ENCODE measurements at regions of chr1 and their contacts with region 1.

Region 1: GRCh38 chr1:15152318-15153183 is 996 bp upstream of the TMEM51 start:
- DNase-seq: peak; percentile 89
- H3K4me3 ChIP-seq: peak overlapping the region; percentile 71 to 83 (median 75)
- H3K27ac ChIP-seq: peak overlapping the region; percentile 81
- H3K4me1 ChIP-seq: peaks cover 18% of the 10 kb centered on the region
- H3K27me3 ChIP-seq: no peaks in the 10 kb centered on the region
- CTCF ChIP-seq: peak; percentile 52 to 82

Region 2: GRCh38 chr1:15168479-15168878 is 15.9 kb after region 1 on chr1:
- CTCF ChIA-PET with region 1: no interaction called
- dilution Hi-C with region 1: no loop called
- in situ Hi-C with region 1: no loop called
- intact Hi-C with region 1: loop called (anchors 1 kb)
- DNase-seq: peak; percentile 99
- H3K4me3 ChIP-seq: no peak overlapping the region
- H3K27ac ChIP-seq: peak overlapping the region; percentile 91
- H3K4me1 ChIP-seq: peaks cover 33% of the 10 kb centered on the region
- H3K27me3 ChIP-seq: no peaks in the 10 kb centered on the region
- CTCF ChIP-seq: peak; percentile 19 to 25

Region 3: DNA sequence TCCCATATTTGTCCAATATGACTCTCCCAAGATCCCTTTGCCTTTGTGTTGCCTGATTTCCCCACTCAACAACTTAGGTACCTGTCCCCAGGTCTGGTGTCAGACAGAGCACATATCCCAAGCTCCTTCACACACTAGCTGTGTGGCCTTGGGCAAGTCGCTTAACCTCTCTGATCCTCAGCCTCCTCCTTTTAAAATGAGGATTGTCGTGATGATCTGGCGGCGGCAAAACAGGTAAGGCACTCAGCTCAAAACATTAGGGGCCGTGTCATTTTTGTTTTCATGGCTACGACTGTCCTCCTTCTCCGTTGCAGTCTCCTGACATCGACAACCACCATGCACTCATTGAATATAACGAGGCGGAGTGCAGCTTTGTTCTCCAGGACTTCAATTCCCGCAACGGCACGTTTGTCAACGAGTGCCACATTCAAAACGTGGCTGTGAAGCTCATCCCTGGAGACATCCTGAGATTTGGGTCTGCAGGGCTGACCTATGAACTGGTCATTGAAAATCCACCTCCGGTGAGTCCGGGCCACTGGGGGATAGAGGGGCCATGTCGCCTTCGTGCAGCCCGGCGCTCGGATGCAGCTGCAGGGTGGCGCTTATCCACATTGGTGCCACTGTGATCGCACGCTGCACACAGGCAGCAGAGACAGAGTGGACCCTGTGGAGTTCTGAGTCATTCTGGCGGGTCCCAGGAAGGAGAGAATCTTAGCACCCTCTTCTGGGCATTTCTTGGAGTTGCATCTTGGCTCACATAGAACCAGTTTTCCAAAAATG is 119.6 kb after region 1 on chr1:
- CTCF ChIA-PET with region 1: interaction called, 4 read pairs
- dilution Hi-C with region 1: no loop called
- in situ Hi-C with region 1: loop called (anchors 5 kb)
- intact Hi-C with region 1: loop called (anchors 1 kb)
- DNase-seq: peak; percentile 70
- H3K4me3 ChIP-seq: no peak overlapping the region
- H3K27ac ChIP-seq: no peak overlapping the region
- H3K4me1 ChIP-seq: peaks cover 4% of the 10 kb centered on the region
- H3K27me3 ChIP-seq: no peaks in the 10 kb centered on the region
- CTCF ChIP-seq: peak; percentile 62 to 85

Region 4: DNA sequence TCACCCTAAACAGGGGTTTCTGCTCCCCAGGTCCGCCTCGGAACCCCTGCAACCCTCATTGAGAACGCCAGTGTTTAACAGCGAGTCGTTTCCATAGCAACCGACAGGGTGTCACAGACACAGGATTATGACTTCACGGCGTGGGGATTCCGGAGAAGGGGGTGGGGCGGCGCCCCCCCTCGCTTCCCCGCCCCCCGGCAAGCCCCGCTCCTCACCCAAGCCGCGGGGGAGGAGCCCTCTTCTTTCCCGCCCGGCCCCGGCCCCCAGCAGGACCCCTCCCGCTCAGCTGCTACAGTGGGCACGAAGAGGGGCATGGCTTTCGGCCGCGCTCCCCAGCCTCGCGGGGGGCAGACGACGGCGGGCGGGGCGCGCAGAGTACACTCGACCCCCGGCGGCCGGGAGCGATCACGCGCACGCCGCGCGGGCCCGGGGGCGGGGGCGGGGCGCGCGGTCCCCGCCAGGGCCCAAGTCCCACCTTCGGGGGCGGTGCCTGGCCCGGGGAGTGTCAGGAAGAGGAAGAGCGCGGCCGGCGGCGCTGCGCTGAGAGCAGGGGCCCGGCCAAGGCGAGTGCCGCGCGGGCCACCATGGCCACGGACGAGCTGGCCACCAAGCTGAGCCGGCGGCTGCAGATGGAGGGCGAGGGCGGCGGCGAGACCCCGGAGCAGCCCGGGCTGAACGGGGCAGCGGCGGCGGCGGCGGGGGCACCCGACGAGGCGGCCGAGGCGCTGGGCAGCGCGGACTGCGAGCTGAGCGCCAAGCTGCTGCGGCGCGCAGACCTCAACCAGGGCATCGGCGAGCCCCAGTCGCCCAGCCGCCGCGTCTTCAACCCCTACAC is 257.1 kb after region 1 on chr1 and contains the start of gene EFHD2:
- CTCF ChIA-PET with region 1: no interaction called
- dilution Hi-C with region 1: no loop called
- in situ Hi-C with region 1: loop called in 1 of 2 experiments (anchors 10 kb)
- intact Hi-C with region 1: no loop called
- DNase-seq: peak; percentile 66
- H3K4me3 ChIP-seq: peak within 1 kb of the TSS; percentile 89 to 92 (median 90)
- H3K27ac ChIP-seq: peak within 1 kb of the TSS; percentile 71
- H3K4me1 ChIP-seq: peaks cover 15% of the 10 kb centered on the region
- H3K27me3 ChIP-seq: no peaks in the 10 kb centered on the region
- CTCF ChIP-seq: peak in 1 of 2 donors; percentile 2
- total RNA-seq, gene EFHD2: 17.8 to 56.2 TPM

Region 5: DNA sequence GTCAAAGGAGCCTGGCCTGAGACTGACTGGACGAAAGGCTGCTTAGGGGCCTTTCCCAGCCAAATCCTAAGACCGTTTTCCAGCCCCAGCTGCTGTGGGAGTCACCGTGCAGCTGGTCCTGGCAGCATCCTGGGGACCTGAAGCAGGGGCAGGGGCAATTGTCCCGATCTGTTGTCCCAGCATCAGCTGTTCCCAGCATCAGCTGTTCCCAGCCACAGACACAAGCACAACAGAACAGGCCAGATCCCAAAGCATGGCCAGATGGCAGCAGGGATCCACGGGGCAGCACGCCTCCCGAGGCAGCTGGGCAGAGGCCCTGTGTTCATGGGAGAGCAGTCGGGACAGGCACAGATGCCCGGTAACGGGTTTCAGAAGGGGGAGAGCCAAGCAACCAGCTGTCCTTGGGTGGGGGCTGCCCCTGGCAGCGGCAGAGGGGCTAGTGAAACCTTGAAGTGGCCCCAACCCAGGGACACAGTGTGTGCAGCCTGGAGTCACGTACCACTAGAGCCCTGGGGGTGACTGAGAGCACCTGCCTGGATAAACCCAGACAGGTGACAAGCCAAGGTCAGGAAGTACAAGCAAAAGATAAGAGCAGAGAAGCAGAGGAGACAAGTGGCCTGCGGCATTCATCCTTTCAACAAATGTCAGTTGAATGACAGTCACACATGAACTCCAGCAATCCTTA is 336.6 kb after region 1 on chr1:
- CTCF ChIA-PET with region 1: no interaction called
- dilution Hi-C with region 1: no loop called
- in situ Hi-C with region 1: no loop called
- intact Hi-C with region 1: no loop called
- DNase-seq: no peak
- H3K4me3 ChIP-seq: no peak overlapping the region
- H3K27ac ChIP-seq: no peak overlapping the region
- H3K4me1 ChIP-seq: no peaks in the 10 kb centered on the region
- H3K27me3 ChIP-seq: no peaks in the 10 kb centered on the region
- CTCF ChIP-seq: no peak

Region 6: GRCh38 chr1:15526490-15527339 is 374.2 kb after region 1 on chr1 and contains the start of gene DNAJC16:
- CTCF ChIA-PET with region 1: no interaction called
- dilution Hi-C with region 1: no loop called
- in situ Hi-C with region 1: no loop called
- intact Hi-C with region 1: loop called (anchors 10 kb)
- DNase-seq: peak; percentile 100
- H3K4me3 ChIP-seq: peak within 1 kb of the TSS; percentile 73 to 93 (median 80)
- H3K27ac ChIP-seq: peak within 1 kb of the TSS; percentile 95
- H3K4me1 ChIP-seq: peaks cover 14% of the 10 kb centered on the region
- H3K27me3 ChIP-seq: no peaks in the 10 kb centered on the region
- CTCF ChIP-seq: peak in 1 of 2 donors; percentile 41
- total RNA-seq, gene DNAJC16: 16.0 to 23.8 TPM